ENCODE measurements at regions of chr20 and their contacts with region 1.

Region 1: DNA sequence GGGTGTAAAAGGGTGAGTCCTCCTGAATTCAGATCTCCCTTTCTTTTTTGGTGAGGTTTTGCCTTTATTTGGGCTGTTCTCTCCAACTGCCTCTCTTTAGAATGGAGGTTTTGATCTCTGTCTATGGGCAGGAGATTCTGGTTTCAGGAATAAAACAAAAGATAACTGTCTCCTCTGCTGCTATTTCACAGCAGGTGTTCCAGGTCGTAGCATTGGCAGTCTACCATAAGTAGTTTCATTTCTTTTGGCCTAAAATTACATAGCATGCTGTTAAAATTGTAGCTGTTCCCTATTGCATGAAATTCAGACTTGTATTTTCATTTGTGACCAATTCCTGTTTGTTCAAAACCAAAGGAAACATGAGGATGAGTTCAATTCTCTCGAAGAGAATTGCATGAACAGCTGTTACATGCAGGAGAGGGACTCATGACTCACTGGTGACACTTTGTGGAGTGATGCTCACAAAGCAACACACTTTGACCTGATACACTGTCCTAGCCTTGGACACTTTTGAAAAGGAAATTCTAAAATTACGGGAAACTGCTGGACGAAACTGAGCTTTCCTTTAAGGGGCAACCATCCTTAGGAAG is 76.8 kb upstream of the SIRPG start:
- DNase-seq: peak in 1 of 10 donors; percentile 20

Region 2: DNA sequence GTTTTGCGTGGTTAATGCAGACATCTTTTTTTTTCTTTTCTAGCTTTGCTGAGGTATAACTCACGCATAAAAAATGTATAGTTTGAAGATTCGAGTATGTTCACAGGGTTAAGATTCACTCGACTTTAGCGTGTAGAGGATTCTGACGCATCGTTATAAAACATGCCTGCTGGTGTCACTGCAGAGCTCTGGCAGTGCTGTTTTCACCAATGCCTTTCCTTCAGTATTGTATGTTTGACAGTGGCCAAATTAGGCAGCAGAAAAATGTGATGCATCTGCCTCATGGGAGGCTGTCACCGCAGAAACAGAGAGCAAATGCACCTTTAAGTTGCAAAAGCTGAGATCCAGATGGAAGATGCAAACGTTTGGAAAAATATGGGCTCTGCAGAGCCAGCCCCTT is 225.1 kb before region 1 on chr20:
- intact Hi-C with region 1: loop called (anchors 1 kb)
- DNase-seq: peak in 7 of 10 donors; percentile 27 to 86 (median 50)

Region 3: DNA sequence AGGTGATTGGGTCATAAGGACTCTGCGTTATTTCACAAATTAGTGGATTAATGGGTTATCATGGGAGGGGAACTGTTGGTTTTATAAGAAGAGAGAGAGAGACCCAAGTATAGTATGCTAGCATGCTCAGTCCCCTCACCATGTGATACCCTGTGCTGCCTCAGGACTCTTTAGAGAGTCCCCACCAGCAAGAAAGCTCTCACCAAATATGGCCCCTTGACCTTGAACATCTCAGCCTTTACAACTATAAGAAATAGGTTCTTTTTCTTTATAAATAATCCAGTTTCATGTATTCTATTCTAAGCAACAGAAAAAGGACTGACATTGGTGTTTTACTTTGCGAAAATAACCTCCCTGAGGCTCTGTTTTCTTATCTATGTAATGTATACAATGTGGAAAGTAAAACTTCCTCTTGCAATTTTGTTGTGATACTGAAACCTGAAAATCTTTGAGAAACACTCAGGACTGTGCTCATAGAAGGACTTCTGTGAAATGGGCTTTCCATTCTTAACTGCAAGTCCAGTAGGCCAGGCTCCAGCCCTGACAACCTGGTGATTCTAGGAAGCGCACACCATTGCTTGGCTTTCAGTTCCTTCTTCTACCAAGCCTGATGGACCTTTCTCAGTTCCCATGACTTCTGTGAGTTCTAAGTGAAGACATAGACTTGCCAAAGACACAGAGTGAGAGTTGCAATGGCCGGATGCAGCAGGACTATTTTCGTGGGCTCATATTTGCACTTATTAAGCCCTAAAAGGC is 198.8 kb before region 1 on chr20:
- intact Hi-C with region 1: loop called (anchors 10 kb)
- DNase-seq: no peak